AG04449 (cell line): ENCODE measurements at regions of chr13 and their contacts with region 1.

Region 1: GRCh38 chr13:49936085-49936940 is at the start of gene SPRYD7:
- DNase-seq: peak; percentile 81
- H3K4me3 ChIP-seq: peak within 1 kb of the TSS; percentile 95
- CTCF ChIP-seq: peak; percentile 95

Region 2: DNA sequence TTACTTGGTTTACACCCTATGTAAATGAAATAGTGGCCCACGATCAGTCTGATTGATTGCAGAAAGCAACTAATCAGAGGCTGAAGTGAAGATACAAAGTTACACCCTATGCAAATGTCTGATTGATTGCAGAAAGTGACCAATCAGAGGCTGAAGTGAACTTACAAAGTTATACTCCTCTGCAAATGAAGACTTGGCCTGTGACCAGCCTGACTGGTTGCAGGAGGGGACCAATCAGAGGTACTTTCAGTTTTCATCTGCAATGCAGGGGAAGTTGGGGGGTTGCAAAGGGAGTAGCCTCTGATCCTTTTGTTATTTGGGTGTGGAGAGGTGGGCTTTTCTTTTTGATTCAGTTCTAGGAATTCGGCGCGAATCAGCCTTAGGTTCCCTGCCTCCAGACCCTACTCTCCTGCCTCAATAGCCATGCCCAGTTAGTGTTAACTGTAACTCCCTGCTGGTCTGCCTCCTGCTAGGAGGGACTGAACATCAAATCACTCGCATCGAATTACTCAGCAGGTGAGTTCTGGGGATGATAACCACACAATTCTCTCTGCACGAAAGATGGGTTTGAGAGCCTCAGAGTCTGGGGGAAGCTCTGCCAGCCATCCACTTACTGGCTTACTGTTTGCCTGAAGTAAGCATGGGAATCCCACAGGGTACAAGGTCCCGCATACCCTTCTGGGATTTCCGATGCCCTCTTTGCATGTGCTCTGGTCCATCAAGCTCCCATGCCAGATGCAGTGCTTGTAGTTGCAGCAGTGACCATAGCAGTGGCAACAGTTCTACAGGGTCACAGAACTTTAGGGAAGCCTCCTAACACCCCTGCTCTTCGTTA is 300.5 kb before region 1 on chr13:
- CTCF ChIA-PET with region 1: no interaction called
- POLR2A ChIA-PET with region 1: no interaction called
- DNase-seq: no peak
- H3K4me3 ChIP-seq: peak overlapping the region; percentile 2; the same call in 1 of the 2 replicates
- CTCF ChIP-seq: no peak

Region 3: GRCh38 chr13:49922301-49922700 is 14.0 kb before region 1 on chr13:
- CTCF ChIA-PET with region 1: interaction called, 19 read pairs
- POLR2A ChIA-PET with region 1: interaction called, 3 read pairs
- DNase-seq: no peak
- H3K4me3 ChIP-seq: no peak overlapping the region
- CTCF ChIP-seq: no peak

Region 4: GRCh38 chr13:49954674-49955491 is 18.6 kb after region 1 on chr13:
- CTCF ChIA-PET with region 1: interaction called, 15 read pairs
- POLR2A ChIA-PET with region 1: no interaction called
- DNase-seq: no peak
- H3K4me3 ChIP-seq: no peak overlapping the region
- CTCF ChIP-seq: no peak